GM13976 (cell line): ENCODE measurements at regions of chr15 and their contacts with region 1.

Region 1: DNA sequence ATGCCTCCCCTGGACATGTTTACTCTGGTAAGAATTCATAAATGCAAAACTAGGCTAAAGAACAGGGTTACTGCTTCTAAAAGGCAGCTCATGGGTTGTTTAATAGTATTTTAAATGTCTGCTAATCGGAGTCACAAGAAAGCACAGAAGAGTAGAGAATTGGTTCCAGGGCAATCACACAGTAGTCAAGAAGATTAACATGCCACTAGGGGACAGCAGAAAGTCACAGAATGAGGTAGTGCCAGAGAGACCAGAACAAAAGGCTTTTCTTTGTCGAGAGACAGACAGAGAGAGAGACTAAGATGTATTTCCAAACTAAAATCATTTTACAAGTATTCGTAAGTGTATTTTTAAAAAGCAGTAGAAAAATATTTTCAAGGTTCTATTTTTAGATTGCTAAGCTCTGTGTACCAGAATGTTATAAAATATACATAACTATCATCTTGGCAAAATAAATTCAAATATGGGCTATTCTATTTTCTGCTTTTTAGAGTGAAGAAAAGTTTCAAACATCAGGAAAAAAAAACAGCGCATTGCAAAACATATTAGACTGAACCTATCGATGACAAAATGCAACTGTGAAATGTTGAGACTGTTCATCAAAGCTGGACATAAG is 78.3 kb upstream of the CDIN1 start:
- DNase-seq: peak; percentile 33
- CTCF ChIP-seq: peak; percentile 68

Region 2: DNA sequence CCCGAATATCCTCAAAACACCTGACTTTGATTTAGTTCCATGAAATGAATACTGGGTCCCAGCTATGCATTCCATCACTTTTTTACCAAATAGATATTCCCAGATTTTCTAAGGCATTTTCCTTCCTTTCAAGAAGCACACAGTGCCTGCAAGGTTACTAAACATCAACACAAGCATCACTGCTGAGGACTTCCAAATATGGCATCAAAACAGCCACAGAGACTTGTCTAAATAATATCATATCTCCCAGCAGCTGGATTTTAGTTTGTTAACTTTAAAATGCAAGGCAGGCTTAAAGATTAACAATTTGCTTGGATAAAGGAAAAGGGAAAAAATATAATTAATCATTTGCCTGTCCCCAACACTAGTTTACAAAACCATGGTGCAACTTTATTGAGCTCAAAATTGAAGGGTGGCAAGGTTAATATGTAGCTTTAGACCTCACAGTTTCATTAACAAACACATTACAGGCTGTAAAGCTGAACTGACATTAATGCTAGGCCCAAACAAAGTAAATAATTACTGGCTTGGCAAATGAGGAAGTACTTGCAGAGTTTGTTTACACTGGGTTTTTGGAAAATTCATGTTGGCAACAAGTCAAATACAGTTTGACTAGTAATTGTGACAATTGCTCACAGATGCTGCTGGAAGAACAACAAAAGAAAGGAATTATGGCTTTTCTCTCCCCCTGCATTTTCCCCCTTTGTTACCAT is 323.4 kb before region 1 on chr15:
- in situ Hi-C with region 1: no loop called
- DNase-seq: no peak
- CTCF ChIP-seq: no peak

Region 3: GRCh38 chr15:37289109-37289765 is 788.1 kb after region 1 on chr15:
- in situ Hi-C with region 1: no loop called
- DNase-seq: no peak
- CTCF ChIP-seq: no peak

Region 4: DNA sequence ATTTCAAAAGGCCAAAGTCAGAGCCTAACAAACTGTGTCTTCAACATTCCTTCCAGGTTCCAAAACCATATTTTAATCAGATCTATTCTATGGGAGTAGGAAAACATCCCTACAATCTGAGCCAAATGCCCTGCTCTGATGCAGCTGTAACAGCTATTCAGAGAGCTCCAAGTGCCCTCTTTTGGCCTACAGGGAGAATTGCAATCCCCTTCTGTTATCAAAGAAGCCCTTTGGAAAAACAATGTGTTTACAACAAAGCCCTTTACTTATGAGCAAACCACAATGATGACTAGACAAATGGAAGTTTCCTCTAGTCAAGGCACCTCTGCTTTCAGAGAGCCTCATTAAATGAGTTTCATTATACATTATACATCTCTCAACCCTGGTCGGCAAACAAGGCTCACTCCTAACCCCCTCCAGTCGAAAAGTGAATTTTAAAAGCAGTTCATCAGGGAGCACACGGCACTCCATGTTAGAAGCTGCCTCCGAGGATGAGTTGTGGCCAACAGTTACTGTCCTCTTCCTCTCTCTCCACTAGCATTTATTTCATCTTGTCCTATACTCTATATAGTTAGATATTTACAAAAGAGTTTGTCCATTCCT is 1390.7 kb after region 1 on chr15:
- in situ Hi-C with region 1: loop called (anchors 25 kb)
- DNase-seq: no peak
- CTCF ChIP-seq: peak; percentile 70